HepG2 (cell line): ENCODE measurements at regions of chr11 and their contacts with region 1.

Region 1: GRCh38 chr11:28697920-28698827 is 590.0 kb downstream of the METTL15 start:
- DNase-seq: peak; percentile 41
- ATAC-seq: peak; percentile 74
- H3K4me3 ChIP-seq: no peak overlapping the region
- H3K27ac ChIP-seq: no peak overlapping the region
- H3K4me1 ChIP-seq: no peaks in the 10 kb centered on the region
- H3K27me3 ChIP-seq: no peaks in the 10 kb centered on the region
- CTCF ChIP-seq: peak; percentile 80
- EP300 ChIP-seq: no peak
- POLR2A ChIP-seq: no peak
- RAD21 ChIP-seq: peak; percentile 27; the same call in 1 of the 2 replicates

Region 2: GRCh38 chr11:29343465-29344333 is 645.5 kb after region 1 on chr11:
- CTCF ChIA-PET with region 1: no interaction called
- POLR2A ChIA-PET with region 1: no interaction called
- in situ Hi-C with region 1: loop called (anchors 25 kb)
- intact Hi-C with region 1: no loop called
- DNase-seq: peak; percentile 28
- ATAC-seq: peak; percentile 98
- H3K4me3 ChIP-seq: no peak overlapping the region
- H3K27ac ChIP-seq: no peak overlapping the region
- H3K4me1 ChIP-seq: no peaks in the 10 kb centered on the region
- H3K27me3 ChIP-seq: no peaks in the 10 kb centered on the region
- CTCF ChIP-seq: peak; percentile 81
- EP300 ChIP-seq: no peak
- POLR2A ChIP-seq: no peak
- RAD21 ChIP-seq: no peak